Calu3 (cell line): ENCODE measurements at regions of chr11 and their contacts with region 1.

Region 1: DNA sequence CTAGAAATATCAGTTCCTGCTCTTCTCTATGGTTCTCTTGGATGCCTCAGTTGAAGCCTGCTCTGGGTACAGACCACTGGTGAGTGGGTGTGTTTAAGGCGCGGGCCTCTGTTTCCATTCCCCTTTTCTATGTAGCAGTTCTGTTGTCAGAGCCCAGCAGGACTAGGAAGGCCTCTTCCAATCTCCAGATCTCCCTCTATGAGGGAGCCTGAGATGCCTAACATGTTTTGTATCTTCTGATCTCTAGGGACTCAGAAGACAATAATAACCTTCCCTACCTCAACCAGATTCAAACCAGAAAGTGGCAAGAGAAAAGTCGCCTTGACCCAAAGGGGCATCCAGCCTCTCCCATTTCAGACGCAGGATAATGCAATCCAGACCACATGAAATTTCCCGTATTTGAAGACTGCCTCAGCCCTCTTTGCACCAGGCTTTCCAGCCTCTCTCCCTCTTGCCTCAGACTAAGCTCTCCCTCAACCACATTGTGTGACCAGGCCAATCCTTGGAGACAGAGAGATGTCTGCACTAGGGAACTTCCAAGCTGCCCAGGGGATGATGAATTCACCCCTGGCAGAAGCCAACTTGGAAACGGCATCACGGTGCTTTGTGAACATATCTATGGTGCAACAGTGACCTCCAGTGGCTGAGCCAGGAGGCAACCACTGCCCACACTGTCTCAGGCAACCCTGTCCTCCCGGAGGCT is 150.1 kb upstream of the UBASH3B start:
- DNase-seq: peak; percentile 70
- H3K4me3 Mint-ChIP-seq: no peak overlapping the region
- H3K27ac Mint-ChIP-seq: no peak overlapping the region
- H3K4me1 Mint-ChIP-seq: no peaks in the 10 kb centered on the region
- H3K27me3 Mint-ChIP-seq: peaks cover 59% of the 10 kb centered on the region
- CTCF ChIP-seq: peak; percentile 63

Region 2: GRCh38 chr11:122115524-122116379 is 389.7 kb before region 1 on chr11 and contains the start of gene BLID:
- CTCF ChIA-PET with region 1: no interaction called
- intact Hi-C with region 1: loop called (anchors 10 kb)
- DNase-seq: peak; percentile 32
- H3K4me3 Mint-ChIP-seq: no peak within 1 kb of the TSS
- H3K27ac Mint-ChIP-seq: no peak within 1 kb of the TSS
- H3K4me1 Mint-ChIP-seq: no peaks in the 10 kb centered on the region
- H3K27me3 Mint-ChIP-seq: no peaks in the 10 kb centered on the region
- CTCF ChIP-seq: peak; percentile 26
- total RNA-seq, gene BLID: not detected in 2 replicates

Region 3: DNA sequence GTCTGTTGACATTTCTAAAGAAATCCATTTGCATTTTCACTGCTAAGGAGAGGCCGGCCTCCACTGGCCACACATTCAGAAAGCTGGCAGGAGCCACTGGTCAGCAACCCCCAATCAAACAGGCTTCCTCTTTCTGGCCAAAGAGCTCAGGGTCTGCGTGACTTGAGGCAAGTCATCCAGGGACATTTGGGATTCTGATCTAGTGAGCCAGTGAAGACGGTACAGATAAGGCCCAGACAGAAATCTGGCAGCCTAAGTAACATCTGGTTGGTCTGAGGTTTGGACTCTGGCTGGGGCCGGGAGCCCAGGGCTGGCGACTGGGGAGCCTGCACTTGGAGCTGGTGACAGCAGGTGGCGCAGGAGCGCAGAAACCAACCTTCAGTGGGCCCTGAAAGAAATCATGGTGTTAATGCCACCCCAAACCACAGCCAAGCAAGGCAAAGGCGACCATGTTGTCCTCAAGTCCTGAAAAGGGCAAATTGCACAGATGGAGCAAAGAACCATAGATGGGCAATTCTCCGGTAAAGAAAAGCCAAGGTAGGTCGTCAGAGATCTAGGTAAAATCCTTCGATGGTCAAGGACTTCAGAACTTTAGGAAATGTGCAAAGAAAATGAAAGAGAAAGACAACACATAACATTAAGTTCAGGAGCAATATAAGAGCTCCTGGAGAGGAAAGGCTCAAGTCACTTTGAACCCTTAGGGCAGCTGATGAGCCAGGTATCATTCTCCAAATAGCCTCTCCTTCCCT is 290.0 kb before region 1 on chr11:
- CTCF ChIA-PET with region 1: interaction called, 6 read pairs
- intact Hi-C with region 1: loop called (anchors 1 kb)
- DNase-seq: peak; percentile 58
- H3K4me3 Mint-ChIP-seq: no peak overlapping the region
- H3K27ac Mint-ChIP-seq: no peak overlapping the region
- H3K4me1 Mint-ChIP-seq: peaks cover 2% of the 10 kb centered on the region
- H3K27me3 Mint-ChIP-seq: peaks cover 29% of the 10 kb centered on the region
- CTCF ChIP-seq: peak; percentile 70

Region 4: GRCh38 chr11:123316003-123316402 is 810.5 kb after region 1 on chr11:
- CTCF ChIA-PET with region 1: no interaction called
- intact Hi-C with region 1: no loop called
- DNase-seq: no peak
- H3K4me3 Mint-ChIP-seq: no peak overlapping the region
- H3K27ac Mint-ChIP-seq: no peak overlapping the region
- H3K4me1 Mint-ChIP-seq: no peaks in the 10 kb centered on the region
- H3K27me3 Mint-ChIP-seq: no peaks in the 10 kb centered on the region
- CTCF ChIP-seq: no peak